CD4-positive, alpha-beta T cell (primary cell): ENCODE measurements at regions of chr4 and their contacts with region 1.

Region 1: DNA sequence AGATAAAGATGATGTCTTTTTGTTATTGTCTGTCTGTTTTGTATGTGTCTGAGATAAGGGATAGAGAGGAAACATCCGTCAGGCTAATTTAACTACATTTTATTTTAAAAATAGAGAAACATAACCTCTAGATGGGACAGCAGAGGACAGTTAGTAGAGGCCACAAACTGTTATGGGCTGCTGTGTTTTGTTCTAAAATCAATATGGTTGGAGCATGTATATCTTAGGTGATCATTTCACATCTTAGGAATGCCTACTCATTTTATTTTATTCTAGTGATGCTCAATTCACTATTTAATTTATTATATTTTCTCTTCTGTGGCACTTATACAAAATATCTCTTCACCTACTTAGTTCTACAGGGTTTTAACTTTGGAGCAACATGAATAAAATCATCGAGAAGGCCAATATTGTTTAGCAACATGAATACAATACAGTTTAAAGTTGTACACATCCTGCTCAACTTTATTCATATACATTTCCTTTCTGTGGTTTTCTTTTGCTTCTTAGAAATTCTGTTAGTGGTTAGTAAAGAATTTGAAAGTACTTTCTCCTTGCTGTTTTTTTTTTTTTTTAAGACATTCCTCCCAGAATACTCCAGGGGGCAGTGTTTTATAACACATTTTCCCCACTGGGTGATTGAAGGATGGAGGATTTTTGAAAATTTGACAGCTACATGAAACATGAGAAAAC is 392.9 kb downstream of the UNC5C start:
- DNase-seq: peak in 3 of 14 experiments; percentile 58 to 62 (median 58)
- ATAC-seq: peak; percentile 77
- H3K4me3 ChIP-seq: no peak overlapping the region
- H3K4me3 Mint-ChIP-seq: peak overlapping the region; percentile 60
- H3K27ac ChIP-seq: no peak overlapping the region
- H3K27ac Mint-ChIP-seq: no peak overlapping the region
- H3K4me1 ChIP-seq: peaks cover 3% of the 10 kb centered on the region
- H3K4me1 Mint-ChIP-seq: peaks cover 22% of the 10 kb centered on the region
- H3K27me3 ChIP-seq: no peaks in the 10 kb centered on the region
- H3K27me3 Mint-ChIP-seq: no peaks in the 10 kb centered on the region
- CTCF ChIP-seq: peak; percentile 71

Region 2: GRCh38 chr4:93802085-93802484 is 1353.8 kb before region 1 on chr4:
- CTCF ChIA-PET with region 1: no interaction called
- POLR2A ChIA-PET with region 1: no interaction called
- intact Hi-C with region 1: no loop called
- DNase-seq: no peak
- ATAC-seq: no peak
- H3K4me3 ChIP-seq: no peak overlapping the region
- H3K4me3 Mint-ChIP-seq: no peak overlapping the region
- H3K27ac ChIP-seq: no peak overlapping the region
- H3K27ac Mint-ChIP-seq: no peak overlapping the region
- H3K4me1 ChIP-seq: no peaks in the 10 kb centered on the region
- H3K4me1 Mint-ChIP-seq: no peaks in the 10 kb centered on the region
- H3K27me3 ChIP-seq: no peaks in the 10 kb centered on the region
- H3K27me3 Mint-ChIP-seq: no peaks in the 10 kb centered on the region
- CTCF ChIP-seq: no peak

Region 3: GRCh38 chr4:96352051-96352517 is 1196.2 kb after region 1 on chr4:
- CTCF ChIA-PET with region 1: no interaction called
- POLR2A ChIA-PET with region 1: no interaction called
- intact Hi-C with region 1: loop called in 1 of 2 experiments (anchors 5 kb)
- DNase-seq: peak in 1 of 14 experiments; percentile 4
- ATAC-seq: no peak
- H3K4me3 ChIP-seq: no peak overlapping the region
- H3K4me3 Mint-ChIP-seq: no peak overlapping the region
- H3K27ac ChIP-seq: no peak overlapping the region
- H3K27ac Mint-ChIP-seq: no peak overlapping the region
- H3K4me1 ChIP-seq: no peaks in the 10 kb centered on the region
- H3K4me1 Mint-ChIP-seq: no peaks in the 10 kb centered on the region
- H3K27me3 ChIP-seq: no peaks in the 10 kb centered on the region
- H3K27me3 Mint-ChIP-seq: no peaks in the 10 kb centered on the region
- CTCF ChIP-seq: no peak

Region 4: DNA sequence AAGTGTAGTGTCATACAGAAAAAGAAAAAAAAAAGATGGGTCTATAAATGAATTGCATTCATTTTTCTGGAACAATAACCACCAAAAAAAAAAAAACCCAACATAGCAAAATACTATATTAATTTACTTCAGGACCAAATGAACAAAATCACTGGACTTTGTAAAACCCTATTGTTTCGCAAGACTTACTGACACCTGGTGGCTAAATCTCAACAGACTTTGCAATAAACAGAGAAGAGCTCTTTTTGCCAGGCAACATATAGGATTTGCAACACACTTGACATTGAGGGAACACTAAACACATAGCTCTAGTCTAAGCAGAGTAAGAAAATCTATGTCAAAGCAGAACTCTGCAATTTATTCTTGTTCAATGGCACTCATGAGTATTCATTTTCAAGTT is 1997.1 kb after region 1 on chr4:
- CTCF ChIA-PET with region 1: no interaction called
- POLR2A ChIA-PET with region 1: no interaction called
- intact Hi-C with region 1: no loop called
- DNase-seq: no peak
- ATAC-seq: no peak
- H3K4me3 ChIP-seq: no peak overlapping the region
- H3K4me3 Mint-ChIP-seq: no peak overlapping the region
- H3K27ac ChIP-seq: no peak overlapping the region
- H3K27ac Mint-ChIP-seq: no peak overlapping the region
- H3K4me1 ChIP-seq: no peaks in the 10 kb centered on the region
- H3K4me1 Mint-ChIP-seq: no peaks in the 10 kb centered on the region
- H3K27me3 ChIP-seq: no peaks in the 10 kb centered on the region
- H3K27me3 Mint-ChIP-seq: no peaks in the 10 kb centered on the region
- CTCF ChIP-seq: no peak